Heart right ventricle (tissue), 16 donors: ENCODE measurements at regions of chr18 and their contacts with region 1.

Region 1: DNA sequence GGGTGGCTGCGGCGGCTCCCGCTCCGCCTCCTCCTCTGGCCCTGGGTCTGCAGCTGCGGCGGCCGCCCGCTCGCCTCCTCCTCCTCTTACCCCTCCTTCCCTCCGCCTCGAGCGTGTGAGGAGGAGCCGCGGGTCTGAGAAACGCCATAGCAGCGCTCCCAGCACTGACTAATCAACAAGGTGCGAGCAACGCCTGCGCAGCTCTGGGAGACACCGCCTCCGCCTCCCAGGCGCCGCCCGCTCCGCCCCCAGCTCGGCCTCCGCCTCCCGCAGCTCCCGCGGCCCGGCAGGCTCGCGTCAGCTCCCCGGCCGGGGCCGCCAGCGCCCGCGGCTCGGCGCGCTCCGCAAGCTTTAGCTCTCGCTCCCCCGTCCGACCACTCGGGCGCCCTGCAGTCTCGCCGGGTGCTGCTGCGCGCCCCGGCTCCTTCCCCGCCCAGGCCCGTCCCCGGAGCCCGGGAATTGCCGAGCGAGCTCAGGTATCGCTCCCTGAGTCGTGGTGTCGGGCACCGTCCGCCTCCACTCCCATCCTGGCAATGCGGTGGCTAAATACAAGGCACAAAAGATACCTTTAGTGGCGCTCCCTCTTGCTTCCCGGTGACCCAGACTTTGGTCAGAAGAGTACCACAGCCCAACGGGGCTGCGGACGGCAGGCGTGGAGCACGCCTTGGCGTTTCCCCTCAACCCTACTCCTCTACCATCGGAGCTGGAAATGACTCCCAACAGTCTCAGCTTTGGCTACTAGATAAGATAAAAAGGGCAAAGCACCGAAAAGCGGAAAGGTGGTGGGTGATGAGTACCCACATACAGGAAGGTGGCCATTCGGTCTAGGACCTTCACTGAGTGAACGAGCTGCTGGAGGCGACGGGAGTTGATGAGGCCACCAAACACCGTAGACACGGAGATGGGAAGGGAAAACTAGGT is at the start of gene GAREM1:
- DNase-seq: peak; percentile 93 to 94
- ATAC-seq: peak; percentile 93 to 99 (median 97)
- H3K4me3 ChIP-seq: peak within 1 kb of the TSS; percentile 66 to 89 (median 78)
- H3K27ac ChIP-seq: peak within 1 kb of the TSS; percentile 72 to 84 (median 80)
- H3K4me1 ChIP-seq: peaks cover 3 to 40% (median 20%) of the 10 kb centered on the region in 9 donors
- H3K27me3 ChIP-seq: peaks cover 0 to 62% (median 7%) of the 10 kb centered on the region in 7 donors
- CTCF ChIP-seq: peak; percentile 59 to 95 (median 80)
- total RNA-seq, gene GAREM1: 8.6 to 26.1 (median 13.9) TPM

Region 2: GRCh38 chr18:32167975-32168730 is 302.8 kb before region 1 on chr18:
- intact Hi-C with region 1: loop called in 1 of 10 experiments (anchors 10 kb)
- DNase-seq: no peak
- ATAC-seq: no peak
- H3K4me3 ChIP-seq: no peak overlapping the region
- H3K27ac ChIP-seq: no peak overlapping the region
- H3K4me1 ChIP-seq: no peaks in the 10 kb centered on the region
- H3K27me3 ChIP-seq: no peaks in the 10 kb centered on the region
- CTCF ChIP-seq: no peak

Region 3: DNA sequence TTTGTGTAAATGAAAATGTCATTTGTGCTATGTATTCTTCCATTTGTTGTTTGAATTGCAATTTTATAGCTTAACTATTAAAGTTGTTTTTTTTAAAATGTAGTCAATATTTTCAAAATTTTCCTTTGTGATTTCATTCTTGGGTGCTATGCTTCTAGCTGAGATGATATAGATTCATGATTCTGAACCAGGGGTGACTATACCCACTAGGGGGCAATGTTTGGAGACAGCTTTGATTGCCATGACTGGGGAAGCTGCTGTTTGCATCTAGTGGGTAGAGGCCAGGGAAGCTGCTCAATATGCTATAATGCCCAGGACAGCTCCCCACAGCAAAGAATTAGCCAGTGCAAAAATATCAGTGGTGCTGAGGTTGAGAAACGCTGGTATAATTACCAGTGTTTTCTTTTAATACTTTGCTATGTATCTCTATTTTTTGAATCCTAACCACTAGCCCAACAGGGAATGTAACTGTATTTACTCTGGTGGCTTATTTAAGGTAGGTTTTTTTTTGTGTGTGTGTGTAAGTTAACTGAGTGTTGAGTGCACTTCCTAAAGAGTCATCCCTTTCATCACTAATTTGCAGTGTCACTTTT is 181.4 kb before region 1 on chr18:
- intact Hi-C with region 1: loop called in 7 of 10 experiments (anchors 1 to 5 kb)
- DNase-seq: peak in 1 of 2 donors; percentile 53
- ATAC-seq: peak in 4 of 8 donors; percentile 67 to 74 (median 70)
- H3K4me3 ChIP-seq: no peak overlapping the region
- H3K27ac ChIP-seq: no peak overlapping the region
- H3K4me1 ChIP-seq: peaks cover 0 to 8% (median 0%) of the 10 kb centered on the region in 9 donors
- H3K27me3 ChIP-seq: no peaks in the 10 kb centered on the region
- CTCF ChIP-seq: peak; percentile 37 to 73 (median 67)

Region 4: GRCh38 chr18:32349728-32350395 is 121.1 kb before region 1 on chr18:
- intact Hi-C with region 1: loop called in 2 of 10 experiments (anchors 10 kb)
- DNase-seq: peak in 1 of 2 donors; percentile 85
- ATAC-seq: peak in 7 of 8 donors; percentile 72 to 85 (median 80)
- H3K4me3 ChIP-seq: peak overlapping the region in 2 of 10 donors; percentile 11 to 12
- H3K27ac ChIP-seq: peak overlapping the region; percentile 47 to 83 (median 66)
- H3K4me1 ChIP-seq: peaks cover 0 to 53% (median 29%) of the 10 kb centered on the region in 9 donors
- H3K27me3 ChIP-seq: no peaks in the 10 kb centered on the region
- CTCF ChIP-seq: no peak

Region 5: GRCh38 chr18:32383050-32383819 is 87.7 kb before region 1 on chr18:
- intact Hi-C with region 1: loop called in 5 of 10 experiments (anchors 5 to 10 kb)
- DNase-seq: no peak
- ATAC-seq: peak; percentile 44 to 75 (median 68)
- H3K4me3 ChIP-seq: no peak overlapping the region
- H3K27ac ChIP-seq: peak overlapping the region in 6 of 10 donors; percentile 2 to 40 (median 16)
- H3K4me1 ChIP-seq: peaks cover 0 to 45% (median 37%) of the 10 kb centered on the region in 9 donors
- H3K27me3 ChIP-seq: no peaks in the 10 kb centered on the region
- CTCF ChIP-seq: no peak

Region 6: DNA sequence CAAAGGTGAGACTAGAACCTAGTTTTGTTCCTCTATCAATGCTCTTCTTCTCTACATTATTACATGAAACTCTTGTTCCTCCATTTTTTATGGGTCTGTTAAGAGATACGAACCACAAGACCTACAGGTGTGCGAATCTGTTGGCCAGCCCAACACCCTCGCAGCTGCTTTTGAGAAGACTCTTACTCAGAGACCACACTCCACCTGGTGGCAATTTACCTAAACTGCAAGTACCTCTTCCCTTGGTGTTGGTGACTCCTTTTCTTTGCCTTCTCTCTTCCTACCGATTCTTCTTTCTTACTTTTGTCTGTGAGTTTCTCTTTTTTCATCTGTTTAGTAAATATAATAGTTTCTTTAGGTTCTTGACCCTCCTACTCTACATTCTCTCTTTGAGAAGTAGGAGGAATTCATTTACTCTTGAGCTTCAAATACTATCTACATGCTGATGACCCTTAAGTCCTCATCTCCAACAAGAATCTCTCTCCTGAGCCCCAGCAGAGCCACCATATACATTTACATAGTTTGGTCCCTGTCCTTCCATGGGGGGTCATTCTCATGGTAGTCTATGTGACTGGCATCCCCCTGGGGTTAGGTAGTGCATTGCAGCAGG is 81.6 kb after region 1 on chr18:
- intact Hi-C with region 1: loop called in 4 of 10 experiments (anchors 5 to 10 kb)
- DNase-seq: peak; percentile 12 to 53
- ATAC-seq: peak in 6 of 8 donors; percentile 59 to 84 (median 66)
- H3K4me3 ChIP-seq: no peak overlapping the region
- H3K27ac ChIP-seq: no peak overlapping the region
- H3K4me1 ChIP-seq: no peaks in the 10 kb centered on the region
- H3K27me3 ChIP-seq: no peaks in the 10 kb centered on the region
- CTCF ChIP-seq: peak; percentile 55 to 83 (median 76)

Region 7: GRCh38 chr18:32669549-32670165 is 198.7 kb after region 1 on chr18:
- intact Hi-C with region 1: no loop called
- DNase-seq: no peak
- ATAC-seq: no peak
- H3K4me3 ChIP-seq: no peak overlapping the region
- H3K27ac ChIP-seq: no peak overlapping the region
- H3K4me1 ChIP-seq: no peaks in the 10 kb centered on the region
- H3K27me3 ChIP-seq: no peaks in the 10 kb centered on the region
- CTCF ChIP-seq: no peak